ENCODE measurements at regions of chr10 and their contacts with region 1.

Region 1: DNA sequence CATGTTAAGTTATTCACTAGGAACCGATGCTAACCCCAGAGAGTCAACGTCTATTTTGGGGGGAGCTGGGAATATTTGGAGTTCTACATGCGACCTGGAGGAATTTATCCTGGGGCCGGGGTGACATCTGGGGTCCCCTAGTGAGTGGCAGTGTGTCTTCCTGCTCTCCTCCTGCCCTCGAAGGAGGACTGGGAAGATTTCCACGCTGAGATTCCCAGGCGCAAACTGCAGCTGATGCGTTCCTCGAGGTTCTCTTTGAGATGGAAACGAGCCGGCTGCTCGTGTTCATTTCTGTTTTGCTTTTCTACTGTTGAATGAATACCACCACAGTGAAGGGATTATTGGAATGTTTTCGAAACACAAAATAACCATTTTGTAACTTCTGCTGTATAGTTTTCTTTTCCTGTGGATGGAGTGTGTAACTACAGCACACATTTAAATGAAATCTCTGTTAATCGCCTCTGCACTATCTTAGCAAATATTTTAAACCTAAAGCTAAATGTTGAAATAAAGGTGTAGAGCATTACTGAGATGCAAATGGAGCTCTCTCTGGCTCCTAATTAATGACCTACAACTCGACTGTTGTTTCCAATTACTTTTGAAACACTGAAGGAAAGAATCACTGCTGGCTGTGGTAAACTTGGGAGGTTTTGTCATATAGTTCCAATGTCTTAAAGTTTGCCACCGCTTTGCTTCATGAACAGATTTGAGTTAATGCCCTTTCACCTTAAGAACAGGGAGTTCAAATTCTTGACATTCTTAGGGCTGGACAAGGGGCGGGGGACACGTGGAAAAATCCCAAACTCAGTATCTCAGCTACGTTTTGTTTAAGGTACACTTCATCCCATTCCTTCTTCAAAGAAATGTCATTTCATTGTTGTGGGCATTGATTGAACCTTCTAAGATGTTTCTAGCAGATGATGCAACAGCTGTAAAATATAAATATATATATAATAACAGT is 21.1 kb downstream of the GATA3 start:
- DNase-seq: no peak
- ATAC-seq: no peak; the same call in 1 of the 2 replicates
- H3K4me3 ChIP-seq: no peak overlapping the region
- H3K27ac ChIP-seq: no peak overlapping the region; the same call in 1 of the 2 replicates
- H3K4me1 ChIP-seq: peaks cover 6% of the 10 kb centered on the region
- H3K27me3 ChIP-seq: no peaks in the 10 kb centered on the region
- CTCF ChIP-seq: no peak

Region 2: GRCh38 chr10:7773845-7774801 is 301.5 kb before region 1 on chr10:
- CTCF ChIA-PET with region 1: no interaction called
- POLR2A ChIA-PET with region 1: interaction called, 12 read pairs
- in situ Hi-C with region 1: no loop called
- intact Hi-C with region 1: no loop called
- DNase-seq: no peak
- ATAC-seq: no peak
- H3K4me3 ChIP-seq: no peak overlapping the region
- H3K27ac ChIP-seq: no peak overlapping the region
- H3K4me1 ChIP-seq: no peaks in the 10 kb centered on the region
- H3K27me3 ChIP-seq: no peaks in the 10 kb centered on the region
- CTCF ChIP-seq: no peak

Measured in Panc1 (cell line).